ENCODE measurements at regions of chr10 and their contacts with region 1.

Region 1: DNA sequence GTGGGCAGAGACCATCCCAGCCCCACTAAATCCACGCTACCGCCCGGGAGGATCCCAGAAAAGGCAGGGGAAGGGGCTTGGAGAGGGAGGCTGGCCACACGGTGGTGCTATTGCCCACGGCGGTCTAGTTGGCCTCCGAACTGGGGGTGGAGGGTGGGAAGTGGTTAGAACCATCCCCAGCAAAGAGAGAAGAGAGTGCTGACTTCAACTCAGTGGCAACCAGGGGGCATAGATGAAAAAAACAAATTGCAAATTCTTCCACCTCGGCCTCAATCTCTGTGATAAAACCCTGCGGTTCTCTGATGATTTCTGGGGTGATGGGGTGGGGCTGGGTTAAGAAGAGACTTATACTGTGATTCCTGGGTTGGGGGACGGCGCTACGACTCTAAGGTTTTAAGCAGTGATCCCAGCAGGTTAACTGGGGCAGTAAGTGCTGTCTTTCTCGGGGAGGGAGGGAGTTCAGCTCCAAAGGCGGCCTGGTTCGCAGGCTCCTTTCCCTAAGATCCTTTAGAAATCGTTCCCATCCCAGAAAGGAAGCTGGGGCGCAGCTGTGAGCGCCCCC is 154.5 kb upstream of the LYZL2 start:
- DNase-seq: peak; percentile 64 to 93 (median 87)
- ATAC-seq: peak; percentile 88
- H3K4me3 ChIP-seq: peak overlapping the region; percentile 55 to 80
- H3K4me3 Mint-ChIP-seq: peak overlapping the region; percentile 84
- H3K27ac ChIP-seq: peak overlapping the region; percentile 64 to 73
- H3K27ac Mint-ChIP-seq: peak overlapping the region; percentile 93
- H3K4me1 ChIP-seq: peaks cover 3% of the 10 kb centered on the region
- H3K4me1 Mint-ChIP-seq: peaks cover 27% of the 10 kb centered on the region
- H3K27me3 ChIP-seq: no peaks in the 10 kb centered on the region
- H3K27me3 Mint-ChIP-seq: no peaks in the 10 kb centered on the region
- CTCF ChIP-seq: peak; percentile 85

Region 2: DNA sequence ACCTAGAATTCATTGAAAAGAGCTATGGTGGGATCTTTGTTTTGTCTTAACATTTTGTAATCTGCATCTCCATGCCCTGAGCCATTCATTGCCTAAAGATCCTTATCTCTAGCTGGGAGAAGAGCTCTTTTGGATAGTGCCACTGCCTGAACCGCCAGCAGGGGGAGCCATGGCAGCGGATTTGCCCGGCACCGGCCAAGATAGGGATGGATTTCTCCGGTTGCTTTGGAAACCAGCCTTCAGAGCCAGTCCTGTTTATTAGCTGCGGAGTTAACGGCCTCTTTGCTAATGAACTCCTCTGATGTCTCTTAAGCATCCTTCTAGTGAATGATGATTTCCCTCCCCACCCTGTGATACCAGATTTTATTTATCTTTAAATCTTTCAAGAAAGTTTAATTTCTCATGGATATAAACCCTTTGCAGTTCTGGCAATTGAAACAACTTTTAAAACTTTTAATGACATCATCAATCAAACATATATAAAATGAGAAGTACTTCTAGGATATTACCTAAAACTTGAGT is 96.3 kb before region 1 on chr10:
- CTCF ChIA-PET with region 1: interaction called, 4 read pairs
- POLR2A ChIA-PET with region 1: interaction called, 3 read pairs
- intact Hi-C with region 1: loop called in 1 of 2 experiments (anchors 10 kb)
- DNase-seq: peak; percentile 54 to 90 (median 78)
- ATAC-seq: peak; percentile 77
- H3K4me3 ChIP-seq: no peak overlapping the region
- H3K4me3 Mint-ChIP-seq: no peak overlapping the region
- H3K27ac ChIP-seq: no peak overlapping the region
- H3K27ac Mint-ChIP-seq: no peak overlapping the region
- H3K4me1 ChIP-seq: peaks cover 3% of the 10 kb centered on the region
- H3K4me1 Mint-ChIP-seq: peaks cover 3% of the 10 kb centered on the region
- H3K27me3 ChIP-seq: peaks cover 0 to 5% of the 10 kb centered on the region in 2 experiments
- H3K27me3 Mint-ChIP-seq: peaks cover 23% of the 10 kb centered on the region
- CTCF ChIP-seq: peak; percentile 97

Region 3: DNA sequence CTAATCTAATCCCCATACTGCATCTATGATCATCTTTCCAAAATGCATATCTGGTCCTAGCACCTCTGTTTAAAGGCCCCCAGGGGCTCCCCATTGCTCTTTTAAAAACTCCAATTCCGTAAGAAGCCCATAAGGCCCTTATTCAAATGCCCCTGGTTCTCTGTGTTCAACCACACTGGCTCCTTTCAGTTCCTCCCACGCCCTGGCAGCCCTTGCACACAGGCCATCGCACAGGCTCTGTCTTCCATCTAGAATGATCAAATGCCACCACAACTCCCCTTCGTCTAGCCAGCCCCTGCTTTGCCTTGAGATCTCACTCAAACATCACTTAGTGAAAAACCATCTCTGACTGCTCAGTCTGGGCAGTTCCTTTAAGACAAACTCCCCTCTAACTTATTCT is 41.5 kb before region 1 on chr10:
- CTCF ChIA-PET with region 1: no interaction called
- POLR2A ChIA-PET with region 1: no interaction called
- intact Hi-C with region 1: no loop called
- DNase-seq: no peak
- ATAC-seq: no peak
- H3K4me3 ChIP-seq: no peak overlapping the region
- H3K4me3 Mint-ChIP-seq: no peak overlapping the region
- H3K27ac ChIP-seq: no peak overlapping the region
- H3K27ac Mint-ChIP-seq: no peak overlapping the region
- H3K4me1 ChIP-seq: no peaks in the 10 kb centered on the region
- H3K4me1 Mint-ChIP-seq: no peaks in the 10 kb centered on the region
- H3K27me3 ChIP-seq: no peaks in the 10 kb centered on the region
- H3K27me3 Mint-ChIP-seq: peaks cover 7% of the 10 kb centered on the region
- CTCF ChIP-seq: no peak

Region 4: DNA sequence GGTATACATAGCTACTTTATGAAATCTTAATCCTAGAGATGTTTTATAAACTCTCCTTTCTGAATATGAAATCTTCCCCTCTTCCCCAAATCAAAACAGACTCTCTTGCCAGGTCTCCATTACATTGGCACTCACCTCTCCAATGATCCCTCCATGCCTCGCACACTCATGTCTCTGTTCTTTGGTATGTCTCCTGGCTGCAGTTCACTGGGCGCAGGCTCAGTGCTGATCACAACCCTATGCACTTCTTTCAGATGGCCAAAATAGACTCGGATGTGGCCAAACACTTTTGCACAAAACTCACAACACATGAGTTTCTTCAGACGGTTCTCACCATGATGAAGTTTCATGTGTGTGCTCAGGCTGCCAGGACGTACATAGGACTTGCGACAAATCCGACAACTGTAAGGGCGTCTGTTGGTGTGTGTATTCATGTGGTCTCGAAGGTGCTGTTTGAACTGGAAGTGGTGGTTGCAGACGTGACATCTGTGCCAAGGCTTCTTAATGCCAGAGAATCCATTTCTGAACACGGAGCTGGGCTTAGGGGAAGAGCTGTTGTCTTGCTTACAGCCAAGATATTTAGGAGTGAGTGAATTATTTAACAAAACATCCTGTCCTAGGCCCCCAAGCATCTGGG is 64.5 kb after region 1 on chr10:
- CTCF ChIA-PET with region 1: interaction called, 25 read pairs
- POLR2A ChIA-PET with region 1: interaction called, 6 read pairs
- intact Hi-C with region 1: loop called in 1 of 2 experiments (anchors 2 kb)
- DNase-seq: peak in 1 of 9 experiments; percentile 51
- ATAC-seq: peak; percentile 70
- H3K4me3 ChIP-seq: no peak overlapping the region
- H3K4me3 Mint-ChIP-seq: no peak overlapping the region
- H3K27ac ChIP-seq: no peak overlapping the region
- H3K27ac Mint-ChIP-seq: peak overlapping the region; percentile 12
- H3K4me1 ChIP-seq: no peaks in the 10 kb centered on the region
- H3K4me1 Mint-ChIP-seq: peaks cover 13% of the 10 kb centered on the region
- H3K27me3 ChIP-seq: no peaks in the 10 kb centered on the region
- H3K27me3 Mint-ChIP-seq: no peaks in the 10 kb centered on the region
- CTCF ChIP-seq: no peak

Region 5: DNA sequence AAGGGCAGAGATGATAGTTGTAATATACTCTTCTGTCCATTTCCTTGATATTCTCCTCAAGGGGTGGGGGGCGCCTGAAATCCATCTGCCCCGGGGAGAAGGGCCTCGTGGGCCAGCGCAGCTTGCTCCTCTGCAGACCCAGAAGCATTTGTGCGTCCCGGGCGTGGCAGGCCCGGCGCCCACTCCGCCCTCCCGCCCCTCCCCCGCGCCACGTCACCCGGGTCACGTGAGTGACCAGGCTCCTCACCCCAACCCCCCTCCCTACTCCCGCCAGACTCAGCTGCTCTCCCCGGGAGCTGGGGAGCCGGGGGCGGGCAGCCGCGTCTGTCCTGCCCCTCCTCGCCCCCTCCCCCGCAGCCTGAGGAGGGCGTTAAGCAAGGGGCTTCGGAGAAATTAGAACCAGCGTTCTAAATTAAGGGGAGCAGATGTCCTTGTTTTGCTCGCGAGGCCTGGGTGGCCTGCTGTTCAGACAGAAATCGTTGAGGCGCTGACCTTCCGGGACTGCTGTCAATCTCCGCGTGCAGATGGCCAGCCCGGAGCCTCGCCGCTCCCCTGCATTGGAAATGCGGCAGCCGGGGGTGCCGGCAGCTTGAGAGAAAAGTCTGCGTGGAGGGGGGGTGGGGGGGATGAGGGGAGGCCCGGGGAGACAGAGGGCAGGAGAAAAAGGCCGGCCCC is 349.7 kb after region 1 on chr10:
- CTCF ChIA-PET with region 1: no interaction called
- POLR2A ChIA-PET with region 1: interaction called, 7 read pairs
- intact Hi-C with region 1: loop called in 1 of 2 experiments (anchors 10 kb)
- DNase-seq: peak; percentile 37 to 84 (median 68)
- ATAC-seq: peak; percentile 70
- H3K4me3 ChIP-seq: peak overlapping the region; percentile 67 to 71
- H3K4me3 Mint-ChIP-seq: peak overlapping the region; percentile 81
- H3K27ac ChIP-seq: peak overlapping the region; percentile 33 to 65
- H3K27ac Mint-ChIP-seq: peak overlapping the region; percentile 76
- H3K4me1 ChIP-seq: peaks cover 32% of the 10 kb centered on the region
- H3K4me1 Mint-ChIP-seq: peaks cover 37% of the 10 kb centered on the region
- H3K27me3 ChIP-seq: no peaks in the 10 kb centered on the region
- H3K27me3 Mint-ChIP-seq: no peaks in the 10 kb centered on the region
- CTCF ChIP-seq: no peak

Region 6: GRCh38 chr10:31490858-31491504 is 707.0 kb after region 1 on chr10:
- CTCF ChIA-PET with region 1: interaction called, 14 read pairs
- POLR2A ChIA-PET with region 1: interaction called, 4 read pairs
- intact Hi-C with region 1: loop called (anchors 1 kb)
- DNase-seq: peak in 3 of 9 experiments; percentile 16 to 61 (median 47)
- ATAC-seq: peak; percentile 62
- H3K4me3 ChIP-seq: no peak overlapping the region
- H3K4me3 Mint-ChIP-seq: no peak overlapping the region
- H3K27ac ChIP-seq: no peak overlapping the region
- H3K27ac Mint-ChIP-seq: no peak overlapping the region
- H3K4me1 ChIP-seq: no peaks in the 10 kb centered on the region
- H3K4me1 Mint-ChIP-seq: peaks cover 4% of the 10 kb centered on the region
- H3K27me3 ChIP-seq: no peaks in the 10 kb centered on the region
- H3K27me3 Mint-ChIP-seq: no peaks in the 10 kb centered on the region
- CTCF ChIP-seq: peak; percentile 33

Region 7: GRCh38 chr10:31808258-31809218 is 1024.5 kb after region 1 on chr10:
- CTCF ChIA-PET with region 1: interaction called, 36 read pairs
- POLR2A ChIA-PET with region 1: no interaction called
- intact Hi-C with region 1: loop called (anchors 1 kb)
- DNase-seq: peak in 4 of 9 experiments; percentile 4 to 74 (median 39)
- ATAC-seq: peak; percentile 57
- H3K4me3 ChIP-seq: no peak overlapping the region
- H3K4me3 Mint-ChIP-seq: no peak overlapping the region
- H3K27ac ChIP-seq: no peak overlapping the region
- H3K27ac Mint-ChIP-seq: peak overlapping the region; percentile 83
- H3K4me1 ChIP-seq: no peaks in the 10 kb centered on the region
- H3K4me1 Mint-ChIP-seq: peaks cover 4% of the 10 kb centered on the region
- H3K27me3 ChIP-seq: no peaks in the 10 kb centered on the region
- H3K27me3 Mint-ChIP-seq: no peaks in the 10 kb centered on the region
- CTCF ChIP-seq: peak; percentile 64

Region 8: DNA sequence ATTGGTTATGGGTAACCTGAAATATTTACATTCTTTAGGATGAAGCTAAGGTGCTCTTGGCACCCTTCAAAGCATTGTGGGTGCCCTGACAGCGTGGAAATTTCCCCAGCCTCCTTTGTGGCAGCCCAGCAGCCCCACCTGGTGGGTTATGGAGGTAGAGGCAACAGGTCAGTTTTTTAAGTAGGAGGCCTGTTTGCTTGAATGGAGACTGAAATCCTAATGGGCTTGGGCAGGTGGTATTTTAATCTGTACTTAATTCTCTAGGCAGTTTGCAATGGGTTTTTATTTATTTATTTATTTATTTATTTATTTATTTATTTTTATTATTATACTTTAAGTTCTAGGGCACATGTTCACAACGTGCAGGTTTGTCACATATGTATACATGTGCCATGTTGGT is 1423.5 kb after region 1 on chr10:
- CTCF ChIA-PET with region 1: no interaction called
- POLR2A ChIA-PET with region 1: no interaction called
- intact Hi-C with region 1: loop called in 1 of 2 experiments (anchors 5 kb)
- DNase-seq: peak; percentile 21 to 66 (median 54)
- ATAC-seq: peak; percentile 65
- H3K4me3 ChIP-seq: no peak overlapping the region
- H3K4me3 Mint-ChIP-seq: no peak overlapping the region
- H3K27ac ChIP-seq: no peak overlapping the region
- H3K27ac Mint-ChIP-seq: no peak overlapping the region
- H3K4me1 ChIP-seq: no peaks in the 10 kb centered on the region
- H3K4me1 Mint-ChIP-seq: no peaks in the 10 kb centered on the region
- H3K27me3 ChIP-seq: no peaks in the 10 kb centered on the region
- H3K27me3 Mint-ChIP-seq: no peaks in the 10 kb centered on the region
- CTCF ChIP-seq: peak; percentile 50